ENCODE measurements at regions of chr2 and their contacts with region 1.

Region 1: GRCh38 chr2:174492963-174493431 is 6.2 kb upstream of the GPR155 start:
- DNase-seq: peak; percentile 88
- ATAC-seq: peak; percentile 86
- H3K4me3 Mint-ChIP-seq: peak overlapping the region; percentile 80
- H3K27ac Mint-ChIP-seq: peak overlapping the region; percentile 97
- H3K4me1 Mint-ChIP-seq: peaks cover 74% of the 10 kb centered on the region
- H3K27me3 Mint-ChIP-seq: no peaks in the 10 kb centered on the region

Region 2: GRCh38 chr2:174522553-174522952 is 29.6 kb after region 1 on chr2:
- CTCF ChIA-PET with region 1: interaction called, 36 read pairs
- POLR2A ChIA-PET with region 1: interaction called, 3 read pairs
- DNase-seq: no peak
- ATAC-seq: no peak
- H3K4me3 Mint-ChIP-seq: no peak overlapping the region
- H3K27ac Mint-ChIP-seq: no peak overlapping the region
- H3K4me1 Mint-ChIP-seq: peaks cover 18% of the 10 kb centered on the region
- H3K27me3 Mint-ChIP-seq: peaks cover 8% of the 10 kb centered on the region

Region 3: DNA sequence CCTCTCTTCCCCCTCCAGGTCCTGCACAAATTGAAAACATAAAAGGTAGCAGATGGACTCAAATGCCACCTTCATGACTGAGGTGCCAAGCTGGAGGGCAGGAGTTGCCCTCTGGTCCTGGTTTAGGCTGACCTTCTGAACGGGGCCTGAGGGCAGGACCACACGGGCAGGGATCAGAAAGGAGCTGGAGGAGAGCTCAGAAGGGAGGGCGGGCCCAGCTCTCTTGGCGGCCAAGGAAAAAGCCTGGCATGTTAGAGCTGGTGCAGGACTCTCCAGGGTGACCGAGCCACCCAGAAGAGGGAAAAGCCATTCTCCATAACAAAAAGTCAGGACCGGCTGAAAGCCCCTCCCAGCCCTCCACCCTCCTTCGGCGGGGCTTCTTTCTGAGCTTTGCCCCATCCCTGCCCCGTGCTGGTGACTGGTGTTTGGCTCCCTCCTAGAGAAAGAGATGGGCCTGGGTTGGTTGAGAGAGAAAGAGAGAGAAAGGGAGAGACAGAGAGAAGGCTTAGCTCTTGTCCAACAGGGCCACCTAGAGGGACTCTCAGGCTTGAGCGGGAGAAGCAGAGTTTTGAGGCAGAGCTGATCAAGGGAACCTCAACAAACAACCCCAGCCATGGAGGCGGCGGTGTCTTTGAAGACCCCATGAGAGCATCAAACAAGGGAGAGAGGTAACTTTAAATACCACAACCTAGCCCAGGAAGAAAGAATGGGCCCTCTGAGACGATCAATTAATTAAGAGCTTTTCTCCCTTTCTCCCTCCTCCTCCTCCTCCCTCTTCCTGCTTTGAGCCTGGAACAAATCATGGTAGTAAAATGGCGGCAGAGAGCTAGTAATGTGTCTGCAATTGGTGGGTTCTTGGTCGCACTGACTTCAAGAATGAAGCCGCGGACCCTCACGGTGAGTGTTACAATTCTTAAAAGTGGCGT is 53.8 kb after region 1 on chr2:
- CTCF ChIA-PET with region 1: interaction called, 16 read pairs
- POLR2A ChIA-PET with region 1: interaction called, 6 read pairs
- DNase-seq: peak; percentile 66
- ATAC-seq: peak; percentile 87
- H3K4me3 Mint-ChIP-seq: no peak overlapping the region
- H3K27ac Mint-ChIP-seq: peak overlapping the region; percentile 32
- H3K4me1 Mint-ChIP-seq: peaks cover 13% of the 10 kb centered on the region
- H3K27me3 Mint-ChIP-seq: peaks cover 3% of the 10 kb centered on the region

Measured in activated CD8-positive, alpha-beta T cell treated with anti-CD3 and anti-CD28 coated beads, Interleukin-2, amount 10 ng/mL, durations not matched to agents 7 days and 5 days (primary cell).